SK-N-SH (cell line): ENCODE measurements at regions of chr9 and their contacts with region 1.

Region 1: DNA sequence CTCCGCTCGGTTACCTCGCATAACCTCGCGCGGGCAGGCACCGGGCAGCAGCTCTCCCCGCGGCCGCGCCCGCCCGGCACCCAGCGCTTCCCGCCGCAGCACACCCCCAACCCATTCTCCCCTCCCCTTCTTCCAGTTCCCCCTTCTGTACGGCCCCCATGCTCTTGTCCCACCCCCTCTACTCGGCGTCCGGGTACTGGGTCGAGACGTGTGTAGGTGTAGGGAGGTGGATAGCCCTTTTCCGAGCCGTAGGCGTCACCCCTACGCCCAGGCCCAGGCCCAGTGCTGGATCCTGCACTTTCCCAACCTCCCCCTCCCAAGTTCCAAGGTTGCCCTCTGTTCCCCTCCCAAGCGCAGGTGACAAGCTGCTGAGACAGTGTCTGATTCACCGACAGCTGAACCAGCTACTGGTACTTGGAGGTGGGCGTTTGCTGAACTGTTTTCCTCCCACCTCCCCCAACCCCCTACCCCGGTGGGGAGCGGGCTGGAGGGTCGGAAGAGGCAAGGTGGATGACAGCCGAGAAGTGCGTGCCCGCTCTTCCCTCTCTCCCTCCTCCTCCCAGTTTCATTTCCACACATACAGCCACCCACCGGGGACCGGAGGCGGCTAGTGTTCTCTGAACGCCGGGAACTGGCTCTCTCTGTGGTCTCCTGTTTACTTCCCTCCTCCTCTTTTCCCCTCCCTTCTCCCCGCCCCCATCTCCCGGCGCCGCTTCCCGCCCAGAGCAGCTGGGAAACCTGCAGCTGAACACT is 6.0 kb upstream of the KLF9 start:
- DNase-seq: peak; percentile 78
- H3K4me3 ChIP-seq: peak overlapping the region; percentile 59 to 73
- H3K27ac ChIP-seq: peak overlapping the region; percentile 99 to 100
- H3K4me1 ChIP-seq: peaks cover 15 to 21% of the 10 kb centered on the region in 2 experiments
- H3K27me3 ChIP-seq: no peaks in the 10 kb centered on the region
- CTCF ChIP-seq: no peak
- EP300 ChIP-seq: peak in 1 of 2 experiments; percentile 22; a peak in 1 of 4 replicates
- RAD21 ChIP-seq: no peak

Region 2: GRCh38 chr9:70484210-70485130 is 64.0 kb after region 1 on chr9:
- CTCF ChIA-PET with region 1: interaction called, 12 read pairs
- POLR2A ChIA-PET with region 1: interaction called, 6 read pairs
- DNase-seq: peak; percentile 74
- H3K4me3 ChIP-seq: no peak overlapping the region; a peak in 1 of 4 replicates
- H3K27ac ChIP-seq: no peak overlapping the region
- H3K4me1 ChIP-seq: peaks cover 8 to 10% of the 10 kb centered on the region in 2 experiments; a peak in 2 of 4 replicates
- H3K27me3 ChIP-seq: no peaks in the 10 kb centered on the region
- CTCF ChIP-seq: peak; percentile 78
- EP300 ChIP-seq: no peak
- RAD21 ChIP-seq: peak; percentile 78